ENCODE measurements at regions of chr1 and their contacts with region 1.

Region 1: GRCh38 chr1:18949686-18950400 is 6.6 kb downstream of the IFFO2 start:
- DNase-seq: peak in 1 of 2 donors; percentile 50
- H3K4me3 ChIP-seq: peak overlapping the region; percentile 7 to 15
- H3K27ac ChIP-seq: peak overlapping the region; percentile 82 to 92
- H3K4me1 ChIP-seq: peaks cover 9 to 45% of the 10 kb centered on the region in 2 donors
- H3K27me3 ChIP-seq: no peaks in the 10 kb centered on the region
- CTCF ChIP-seq: no peak
- POLR2A ChIP-seq: no peak

Region 2: DNA sequence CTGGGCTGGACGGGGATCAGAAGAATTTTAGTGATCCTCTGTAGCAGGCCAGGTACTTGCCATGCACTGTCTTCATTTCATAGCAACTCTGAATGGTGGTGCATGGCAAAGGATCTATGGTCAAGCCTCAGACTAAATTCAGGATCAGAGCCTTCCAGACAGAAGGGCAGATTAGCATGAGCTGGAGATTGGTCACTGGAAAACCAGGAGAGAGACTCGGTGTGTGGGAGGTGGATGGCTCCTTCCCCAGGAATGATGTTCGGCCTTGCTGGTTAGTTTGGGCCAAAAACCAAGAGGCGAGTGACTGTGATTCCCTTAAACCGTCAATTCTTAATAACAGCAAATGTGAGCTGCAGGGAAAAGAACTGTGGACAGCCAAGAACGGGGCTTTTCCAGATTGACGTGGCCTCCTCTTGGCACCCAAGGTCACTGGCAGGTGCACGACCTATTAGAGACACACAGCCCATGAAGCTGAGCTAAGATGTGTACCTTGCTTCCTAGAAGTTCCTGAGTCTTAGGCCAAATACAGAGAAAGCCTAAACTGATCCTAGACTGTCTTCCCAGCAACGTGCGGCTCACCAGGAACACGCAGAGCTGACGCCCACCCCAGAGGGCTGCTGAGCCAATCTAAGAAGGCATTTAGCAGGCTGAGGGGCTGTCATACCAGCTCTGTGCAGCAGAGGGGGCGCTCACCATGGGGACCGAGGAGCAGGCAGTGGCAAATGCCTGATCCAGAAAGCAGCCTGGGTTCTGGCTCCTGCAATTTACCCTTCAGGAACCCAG is 66.0 kb before region 1 on chr1:
- intact Hi-C with region 1: loop called (anchors 2 kb)
- DNase-seq: peak; percentile 73
- H3K4me3 ChIP-seq: no peak overlapping the region
- H3K27ac ChIP-seq: no peak overlapping the region
- H3K4me1 ChIP-seq: no peaks in the 10 kb centered on the region
- H3K27me3 ChIP-seq: no peaks in the 10 kb centered on the region
- CTCF ChIP-seq: peak; percentile 70 to 89 (median 82)
- POLR2A ChIP-seq: no peak

Region 3: GRCh38 chr1:18913065-18913835 is 36.6 kb before region 1 on chr1:
- intact Hi-C with region 1: loop called (anchors 5 kb)
- DNase-seq: peak; percentile 84 to 85
- H3K4me3 ChIP-seq: no peak overlapping the region
- H3K27ac ChIP-seq: peak overlapping the region; percentile 57 to 79
- H3K4me1 ChIP-seq: no peaks in the 10 kb centered on the region
- H3K27me3 ChIP-seq: no peaks in the 10 kb centered on the region
- CTCF ChIP-seq: peak; percentile 91 to 98 (median 96)
- POLR2A ChIP-seq: no peak